ENCODE measurements at regions of chr5 and their contacts with region 1.

Region 1: GRCh38 chr5:169583424-169584204 is at the start of gene SPDL1:
- DNase-seq: peak; percentile 97
- ATAC-seq: peak; percentile 96
- H3K4me3 Mint-ChIP-seq: peak within 1 kb of the TSS; percentile 93
- H3K27ac Mint-ChIP-seq: peak within 1 kb of the TSS; percentile 87
- H3K4me1 Mint-ChIP-seq: peaks cover 38% of the 10 kb centered on the region
- H3K27me3 Mint-ChIP-seq: no peaks in the 10 kb centered on the region
- total RNA-seq, gene SPDL1: 40.3 to 56.6 TPM

Region 2: GRCh38 chr5:168486136-168486879 is 1097.3 kb before region 1 on chr5 and contains the start of gene RARS1:
- CTCF ChIA-PET with region 1: no interaction called
- POLR2A ChIA-PET with region 1: interaction called, 3 read pairs
- intact Hi-C with region 1: loop called (anchors 1 to 5 kb)
- DNase-seq: peak; percentile 94
- ATAC-seq: peak; percentile 92
- H3K4me3 Mint-ChIP-seq: peak within 1 kb of the TSS; percentile 100
- H3K27ac Mint-ChIP-seq: peak within 1 kb of the TSS; percentile 97
- H3K4me1 Mint-ChIP-seq: peaks cover 36% of the 10 kb centered on the region
- H3K27me3 Mint-ChIP-seq: no peaks in the 10 kb centered on the region
- total RNA-seq, gene RARS1: 127 to 135 TPM

Region 3: DNA sequence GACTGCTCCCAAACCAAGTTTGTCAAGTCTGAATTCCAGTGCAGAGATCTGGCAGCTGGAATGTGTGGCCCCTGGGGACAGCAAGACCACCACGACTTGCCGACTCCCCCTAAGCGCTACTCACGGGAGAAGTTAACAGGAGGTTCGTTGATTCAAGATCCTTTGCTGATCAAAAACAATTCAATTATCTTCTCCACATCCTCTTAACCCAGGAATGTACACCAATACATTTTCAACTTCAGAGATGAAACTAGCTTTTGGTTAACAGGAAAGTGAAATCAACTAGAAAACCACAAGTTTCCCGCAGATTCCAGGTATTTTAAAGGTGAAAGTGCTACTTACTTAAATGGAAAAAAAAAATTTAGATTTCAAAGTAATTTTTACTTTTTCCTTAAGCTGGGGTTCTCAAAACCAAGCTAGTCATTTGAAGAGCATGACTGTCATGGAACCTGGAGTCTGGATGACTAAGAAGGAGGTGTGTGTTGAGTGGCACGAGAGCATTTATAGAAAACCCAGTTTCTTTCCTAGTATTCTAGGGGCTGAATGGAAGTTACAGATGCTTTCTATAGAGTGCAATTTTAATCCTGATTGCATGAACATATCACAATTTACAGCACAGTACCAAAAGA is 746.9 kb before region 1 on chr5:
- CTCF ChIA-PET with region 1: no interaction called
- POLR2A ChIA-PET with region 1: no interaction called
- intact Hi-C with region 1: loop called in 1 of 2 experiments (anchors 5 kb)
- DNase-seq: peak; percentile 59
- ATAC-seq: peak; percentile 84
- H3K4me3 Mint-ChIP-seq: peak overlapping the region; percentile 73
- H3K27ac Mint-ChIP-seq: peak overlapping the region; percentile 90
- H3K4me1 Mint-ChIP-seq: peaks cover 59% of the 10 kb centered on the region
- H3K27me3 Mint-ChIP-seq: peaks cover 11% of the 10 kb centered on the region

Region 4: GRCh38 chr5:169302491-169303118 is 281.0 kb before region 1 on chr5:
- CTCF ChIA-PET with region 1: no interaction called
- POLR2A ChIA-PET with region 1: no interaction called
- intact Hi-C with region 1: loop called in 1 of 2 experiments (anchors 1 kb)
- DNase-seq: peak; percentile 83
- ATAC-seq: peak; percentile 78
- H3K4me3 Mint-ChIP-seq: no peak overlapping the region
- H3K27ac Mint-ChIP-seq: no peak overlapping the region
- H3K4me1 Mint-ChIP-seq: peaks cover 13% of the 10 kb centered on the region
- H3K27me3 Mint-ChIP-seq: peaks cover 56% of the 10 kb centered on the region

Region 5: GRCh38 chr5:169637085-169637548 is 53.5 kb after region 1 on chr5 and contains the start of gene DOCK2:
- CTCF ChIA-PET with region 1: interaction called, 5 read pairs
- POLR2A ChIA-PET with region 1: interaction called, 14 read pairs
- intact Hi-C with region 1: loop called (anchors 1 kb)
- DNase-seq: peak; percentile 82
- ATAC-seq: peak; percentile 77
- H3K4me3 Mint-ChIP-seq: peak within 1 kb of the TSS; percentile 89
- H3K27ac Mint-ChIP-seq: peak within 1 kb of the TSS; percentile 94
- H3K4me1 Mint-ChIP-seq: peaks cover 46% of the 10 kb centered on the region
- H3K27me3 Mint-ChIP-seq: no peaks in the 10 kb centered on the region
- total RNA-seq, gene DOCK2: 189 to 198 TPM

Region 6: GRCh38 chr5:169805527-169805934 is 221.9 kb after region 1 on chr5:
- CTCF ChIA-PET with region 1: no interaction called
- POLR2A ChIA-PET with region 1: interaction called, 15 read pairs
- intact Hi-C with region 1: loop called in 1 of 2 experiments (anchors 2 kb)
- DNase-seq: peak; percentile 82
- ATAC-seq: peak; percentile 90
- H3K4me3 Mint-ChIP-seq: peak overlapping the region; percentile 38
- H3K27ac Mint-ChIP-seq: peak overlapping the region; percentile 98
- H3K4me1 Mint-ChIP-seq: peaks cover 51% of the 10 kb centered on the region
- H3K27me3 Mint-ChIP-seq: no peaks in the 10 kb centered on the region

Measured in activated CD4-positive, alpha-beta T cell treated with anti-CD3 and anti-CD28 coated beads for 36 hours (primary cell).